Calu3 (cell line): ENCODE measurements at regions of chr6 and their contacts with region 1.

Region 1: GRCh38 chr6:139369568-139370282 is 4.7 kb downstream of the CITED2 start:
- DNase-seq: no peak
- H3K4me3 Mint-ChIP-seq: no peak overlapping the region
- H3K27ac Mint-ChIP-seq: no peak overlapping the region
- H3K4me1 Mint-ChIP-seq: peaks cover 10% of the 10 kb centered on the region
- H3K27me3 Mint-ChIP-seq: no peaks in the 10 kb centered on the region
- CTCF ChIP-seq: peak; percentile 49

Region 2: DNA sequence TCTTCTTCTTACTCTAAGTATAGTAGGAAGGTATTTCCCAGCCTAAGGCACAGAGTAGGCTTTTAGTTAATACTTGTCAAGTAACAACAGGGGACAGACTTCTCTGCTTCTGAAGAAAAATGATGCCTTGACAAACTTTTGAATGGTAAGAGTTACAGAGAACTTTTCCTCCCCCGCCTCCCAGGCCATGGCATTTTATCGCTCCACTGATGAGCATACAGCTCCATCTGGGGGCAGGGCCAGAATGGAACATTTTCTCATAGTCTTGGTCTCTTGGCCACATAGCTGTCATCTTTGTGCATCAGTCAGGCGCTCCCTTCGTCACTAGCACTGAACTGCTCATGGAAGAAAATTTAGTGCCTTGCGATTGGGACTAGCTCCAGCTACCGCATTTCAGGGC is 1071.5 kb after region 1 on chr6:
- CTCF ChIA-PET with region 1: interaction called, 3 read pairs
- intact Hi-C with region 1: loop called (anchors 5 kb)
- DNase-seq: peak; percentile 16
- H3K4me3 Mint-ChIP-seq: no peak overlapping the region
- H3K27ac Mint-ChIP-seq: no peak overlapping the region
- H3K4me1 Mint-ChIP-seq: no peaks in the 10 kb centered on the region
- H3K27me3 Mint-ChIP-seq: no peaks in the 10 kb centered on the region
- CTCF ChIP-seq: no peak